ENCODE measurements at regions of chr6 and their contacts with region 1.

Region 1: DNA sequence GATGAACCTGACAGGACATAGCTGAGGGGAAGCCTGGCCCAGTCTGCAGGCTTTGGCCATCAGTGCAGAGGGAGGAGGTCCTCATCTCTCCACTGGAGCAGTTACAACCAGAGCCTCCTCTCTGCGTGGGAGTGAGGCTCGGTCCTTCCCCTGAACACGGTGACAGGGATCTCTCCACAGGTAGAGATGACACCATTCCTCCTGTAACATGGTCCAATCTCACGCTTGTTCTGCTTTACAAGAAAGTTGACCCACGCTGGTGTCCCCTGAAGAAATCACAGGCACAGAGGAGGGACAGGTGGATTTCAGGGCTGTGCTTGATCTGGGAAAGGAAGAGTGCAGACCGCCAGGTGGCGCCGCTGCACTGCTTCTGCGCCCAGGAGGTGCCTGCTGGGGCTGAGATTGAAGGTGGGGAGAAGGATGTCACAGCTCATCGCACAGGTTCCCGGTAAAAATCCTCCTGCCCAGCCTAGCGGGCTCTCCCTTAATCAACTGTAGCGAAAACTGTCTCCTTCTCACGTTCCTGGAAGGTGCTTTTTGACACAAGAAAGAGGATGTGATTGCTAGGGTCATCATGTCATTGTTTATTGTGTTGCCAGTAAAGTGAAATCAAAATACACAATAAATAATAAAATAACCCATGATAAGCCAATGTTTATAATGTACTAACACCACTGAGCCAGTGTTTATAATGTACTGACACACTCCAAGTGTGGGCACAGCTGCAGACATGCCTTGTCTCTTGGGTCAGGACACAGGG is 20.4 kb downstream of the HLA-G start:
- DNase-seq: peak; percentile 6
- H3K4me3 ChIP-seq: no peak overlapping the region
- H3K27ac ChIP-seq: no peak overlapping the region
- H3K27me3 ChIP-seq: peaks cover 30% of the 10 kb centered on the region
- CTCF ChIP-seq: peak; percentile 96

Region 2: DNA sequence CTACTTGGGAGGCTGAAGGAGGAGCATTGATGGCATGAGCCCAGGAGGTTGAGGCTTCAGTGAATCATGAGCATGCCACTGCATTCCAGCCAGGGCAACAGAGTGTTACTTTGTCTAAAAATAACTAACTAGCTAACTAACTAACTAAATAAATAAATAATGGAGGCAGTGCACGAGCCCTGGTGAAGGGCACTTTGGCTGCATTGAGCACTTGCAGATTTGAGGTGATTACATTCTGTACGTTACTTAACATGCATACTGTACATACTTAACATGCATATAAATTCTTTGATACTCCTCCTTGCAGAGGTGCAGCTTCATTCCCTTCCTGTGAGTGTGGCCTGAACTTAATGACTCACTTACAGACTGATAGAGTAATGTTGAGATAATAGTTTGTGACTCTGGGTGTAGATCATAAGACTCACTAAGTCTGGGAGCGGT is 105.0 kb after region 1 on chr6:
- CTCF ChIA-PET with region 1: interaction called, 11 read pairs
- POLR2A ChIA-PET with region 1: no interaction called
- DNase-seq: peak; percentile 41
- H3K4me3 ChIP-seq: no peak overlapping the region
- H3K27ac ChIP-seq: peak overlapping the region; percentile 42
- H3K27me3 ChIP-seq: no peaks in the 10 kb centered on the region
- CTCF ChIP-seq: no peak

Region 3: DNA sequence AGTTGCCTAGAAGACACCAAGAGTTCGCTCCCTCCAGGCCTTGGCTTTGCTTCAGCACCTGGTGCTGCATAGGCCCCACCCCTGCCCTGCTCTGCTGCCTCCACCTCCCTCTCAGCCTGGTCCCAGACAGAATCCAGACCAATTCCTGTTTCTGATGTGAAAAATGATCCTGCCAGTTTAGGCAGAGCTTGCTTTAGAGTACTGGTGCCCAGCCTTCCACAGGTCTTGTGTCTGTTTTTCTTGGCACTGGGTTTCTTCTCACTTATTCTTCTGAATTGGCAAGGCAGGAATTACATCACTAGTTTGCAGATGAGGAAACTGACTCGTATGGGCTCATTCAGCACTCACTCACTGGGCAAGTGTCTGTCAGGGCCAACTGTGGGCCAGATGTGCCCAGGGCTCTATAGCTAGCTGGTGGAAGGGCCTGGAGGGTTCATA is 147.3 kb after region 1 on chr6:
- CTCF ChIA-PET with region 1: no interaction called
- POLR2A ChIA-PET with region 1: no interaction called
- DNase-seq: no peak
- H3K4me3 ChIP-seq: no peak overlapping the region
- H3K27ac ChIP-seq: no peak overlapping the region
- H3K27me3 ChIP-seq: peaks cover 18% of the 10 kb centered on the region
- CTCF ChIP-seq: no peak

Region 4: DNA sequence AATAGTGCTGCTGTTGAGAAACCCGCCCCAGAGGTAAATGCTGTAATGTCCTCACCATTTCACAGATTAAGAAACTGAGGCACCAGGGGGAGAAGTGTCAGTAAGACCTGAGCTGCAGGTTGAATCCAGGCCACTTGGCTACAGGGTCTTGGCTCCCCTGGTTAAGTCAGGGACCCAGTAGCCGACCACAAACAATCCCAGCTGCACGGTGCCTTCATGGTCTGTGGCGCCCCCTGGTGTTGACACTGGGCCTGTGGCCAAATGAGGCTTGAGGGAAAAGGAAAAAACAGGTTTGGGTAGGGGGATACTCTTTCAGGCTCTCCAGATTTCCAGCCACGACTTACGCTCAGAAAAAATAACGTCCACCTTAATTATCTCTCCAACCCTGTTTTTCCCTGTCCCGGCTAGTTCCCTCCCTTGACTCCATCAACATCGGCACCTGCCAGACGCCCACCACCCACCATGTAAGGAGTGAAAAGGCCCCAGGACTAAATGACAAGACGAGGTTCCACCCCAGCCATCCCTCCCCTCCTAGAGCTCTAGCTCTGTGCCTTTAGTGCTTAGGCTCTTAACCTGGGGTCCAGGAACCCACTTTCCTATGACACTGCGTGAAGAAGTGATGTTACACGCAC is 165.4 kb after region 1 on chr6:
- CTCF ChIA-PET with region 1: interaction called, 65 read pairs
- POLR2A ChIA-PET with region 1: no interaction called
- DNase-seq: no peak
- H3K4me3 ChIP-seq: no peak overlapping the region
- H3K27ac ChIP-seq: no peak overlapping the region
- H3K27me3 ChIP-seq: peaks cover 6% of the 10 kb centered on the region
- CTCF ChIP-seq: peak; percentile 84

Measured in AG04450 (cell line).